WTC11 (cell line): ENCODE measurements at regions of chr20 and their contacts with region 1.

Region 1: DNA sequence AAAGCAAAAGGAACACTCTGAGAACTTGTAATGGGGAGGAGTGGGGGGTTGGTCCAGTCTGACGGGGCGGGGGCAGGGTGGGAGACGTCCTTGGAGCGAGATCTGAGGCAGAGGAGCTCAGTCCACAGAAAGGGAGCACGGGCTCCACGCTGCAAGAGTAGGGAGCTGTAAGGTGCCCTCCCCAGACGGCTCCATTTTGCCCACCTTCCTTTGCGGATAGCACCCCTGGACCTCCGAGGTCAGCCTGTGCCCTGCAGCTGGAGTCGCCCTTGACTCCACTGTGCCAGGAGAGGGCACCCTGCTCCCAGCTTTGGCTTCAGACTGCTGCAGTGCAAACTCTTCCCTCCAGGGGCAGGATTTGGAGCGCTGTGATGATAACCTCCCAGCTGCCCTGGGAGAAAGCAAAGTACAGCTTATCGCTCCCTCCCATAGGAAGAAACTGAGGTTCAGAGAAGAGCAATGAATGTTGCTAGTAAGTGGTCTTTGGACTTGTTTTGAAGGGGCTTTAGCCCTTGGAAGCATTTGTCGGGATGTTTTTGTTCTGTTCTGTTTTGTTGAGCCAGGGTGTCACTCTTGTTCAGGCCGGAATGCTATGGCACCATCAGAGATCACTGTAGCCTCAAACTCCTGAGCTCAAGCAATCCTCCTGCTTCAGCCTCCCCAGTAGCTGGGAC is 9.5 kb upstream of the AHCY start:
- DNase-seq: peak; percentile 95
- ATAC-seq: peak; percentile 90
- H3K4me3 Mint-ChIP-seq: peak overlapping the region; percentile 81
- H3K27ac Mint-ChIP-seq: no peak overlapping the region
- H3K4me1 Mint-ChIP-seq: peaks cover 7% of the 10 kb centered on the region; the same call in 1 of the 2 replicates
- H3K27me3 Mint-ChIP-seq: peaks cover 16% of the 10 kb centered on the region
- CTCF ChIP-seq: peak; percentile 93

Region 2: GRCh38 chr20:34232494-34233087 is 80.1 kb before region 1 on chr20:
- CTCF ChIA-PET with region 1: no interaction called
- POLR2A ChIA-PET with region 1: no interaction called
- DNase-seq: no peak
- ATAC-seq: no peak
- H3K4me3 Mint-ChIP-seq: no peak overlapping the region
- H3K27ac Mint-ChIP-seq: no peak overlapping the region
- H3K4me1 Mint-ChIP-seq: no peaks in the 10 kb centered on the region
- H3K27me3 Mint-ChIP-seq: peaks cover 3% of the 10 kb centered on the region; the same call in 1 of the 2 replicates
- CTCF ChIP-seq: no peak

Region 3: GRCh38 chr20:34324541-34324940 is 11.9 kb after region 1 on chr20:
- CTCF ChIA-PET with region 1: interaction called, 29 read pairs
- POLR2A ChIA-PET with region 1: interaction called, 4 read pairs
- DNase-seq: no peak
- ATAC-seq: no peak; the same call in 1 of the 2 replicates
- H3K4me3 Mint-ChIP-seq: no peak overlapping the region
- H3K27ac Mint-ChIP-seq: no peak overlapping the region
- H3K4me1 Mint-ChIP-seq: peaks cover 33% of the 10 kb centered on the region
- H3K27me3 Mint-ChIP-seq: no peaks in the 10 kb centered on the region; the same call in 1 of the 2 replicates
- CTCF ChIP-seq: no peak

Region 4: GRCh38 chr20:34389206-34389953 is 76.7 kb after region 1 on chr20:
- CTCF ChIA-PET with region 1: interaction called, 36 read pairs
- POLR2A ChIA-PET with region 1: interaction called, 4 read pairs
- DNase-seq: no peak
- ATAC-seq: no peak
- H3K4me3 Mint-ChIP-seq: no peak overlapping the region
- H3K27ac Mint-ChIP-seq: peak overlapping the region; percentile 63
- H3K4me1 Mint-ChIP-seq: peaks cover 21% of the 10 kb centered on the region
- H3K27me3 Mint-ChIP-seq: no peaks in the 10 kb centered on the region
- CTCF ChIP-seq: no peak

Region 5: GRCh38 chr20:34431168-34431567 is 118.5 kb after region 1 on chr20:
- CTCF ChIA-PET with region 1: interaction called, 18 read pairs
- POLR2A ChIA-PET with region 1: no interaction called
- DNase-seq: no peak
- ATAC-seq: no peak
- H3K4me3 Mint-ChIP-seq: no peak overlapping the region
- H3K27ac Mint-ChIP-seq: peak overlapping the region; percentile 52
- H3K4me1 Mint-ChIP-seq: no peaks in the 10 kb centered on the region
- H3K27me3 Mint-ChIP-seq: no peaks in the 10 kb centered on the region
- CTCF ChIP-seq: no peak

Region 6: GRCh38 chr20:34473262-34473883 is 160.7 kb after region 1 on chr20:
- CTCF ChIA-PET with region 1: interaction called, 36 read pairs
- POLR2A ChIA-PET with region 1: no interaction called
- DNase-seq: peak; percentile 74
- ATAC-seq: peak; percentile 94
- H3K4me3 Mint-ChIP-seq: no peak overlapping the region
- H3K27ac Mint-ChIP-seq: no peak overlapping the region
- H3K4me1 Mint-ChIP-seq: no peaks in the 10 kb centered on the region
- H3K27me3 Mint-ChIP-seq: no peaks in the 10 kb centered on the region
- CTCF ChIP-seq: no peak

Region 7: DNA sequence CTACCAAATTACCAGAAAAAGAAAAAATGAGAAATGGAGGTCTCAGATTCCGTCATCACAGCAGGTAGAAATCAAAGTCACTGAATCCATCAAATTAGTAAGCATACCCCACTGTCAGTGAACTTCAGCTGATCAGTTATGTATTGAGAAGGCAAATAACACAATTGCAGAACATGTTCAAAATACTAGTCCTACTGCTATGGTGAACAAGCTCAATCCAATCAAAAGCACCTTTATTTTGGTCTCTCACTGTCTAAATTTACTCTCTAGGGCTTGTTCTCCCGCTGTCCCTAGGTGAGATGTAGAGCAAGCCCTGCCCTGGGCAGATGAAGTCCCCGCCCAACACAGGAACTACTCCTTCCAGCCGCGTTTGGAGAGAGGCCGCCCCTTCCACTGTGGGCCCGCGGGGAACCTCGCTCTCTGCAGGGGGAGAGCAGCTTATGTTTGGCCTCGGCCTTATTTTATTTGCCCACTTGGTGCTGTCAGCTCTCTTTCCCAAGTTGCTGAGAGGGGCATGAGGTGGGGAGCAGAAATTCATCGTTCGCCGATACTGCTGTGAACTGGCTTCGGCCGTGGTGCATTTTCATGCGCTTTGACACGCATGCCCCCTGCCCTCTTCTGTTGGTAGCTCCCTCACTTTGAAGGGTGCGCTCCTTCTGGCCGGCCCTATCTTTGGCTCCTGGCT is 231.6 kb after region 1 on chr20:
- CTCF ChIA-PET with region 1: interaction called, 17 read pairs
- POLR2A ChIA-PET with region 1: no interaction called
- DNase-seq: peak; percentile 48
- ATAC-seq: peak; percentile 89
- H3K4me3 Mint-ChIP-seq: peak overlapping the region; percentile 56
- H3K27ac Mint-ChIP-seq: no peak overlapping the region; the same call in 1 of the 2 replicates
- H3K4me1 Mint-ChIP-seq: peaks cover 13% of the 10 kb centered on the region
- H3K27me3 Mint-ChIP-seq: 0 out of 2 replicates have a peak, but pooled peaks cover 3% of the 10 kb centered on the region
- CTCF ChIP-seq: no peak